Caco-2 (cell line): ENCODE measurements at regions of chr20 and their contacts with region 1.

Region 1: DNA sequence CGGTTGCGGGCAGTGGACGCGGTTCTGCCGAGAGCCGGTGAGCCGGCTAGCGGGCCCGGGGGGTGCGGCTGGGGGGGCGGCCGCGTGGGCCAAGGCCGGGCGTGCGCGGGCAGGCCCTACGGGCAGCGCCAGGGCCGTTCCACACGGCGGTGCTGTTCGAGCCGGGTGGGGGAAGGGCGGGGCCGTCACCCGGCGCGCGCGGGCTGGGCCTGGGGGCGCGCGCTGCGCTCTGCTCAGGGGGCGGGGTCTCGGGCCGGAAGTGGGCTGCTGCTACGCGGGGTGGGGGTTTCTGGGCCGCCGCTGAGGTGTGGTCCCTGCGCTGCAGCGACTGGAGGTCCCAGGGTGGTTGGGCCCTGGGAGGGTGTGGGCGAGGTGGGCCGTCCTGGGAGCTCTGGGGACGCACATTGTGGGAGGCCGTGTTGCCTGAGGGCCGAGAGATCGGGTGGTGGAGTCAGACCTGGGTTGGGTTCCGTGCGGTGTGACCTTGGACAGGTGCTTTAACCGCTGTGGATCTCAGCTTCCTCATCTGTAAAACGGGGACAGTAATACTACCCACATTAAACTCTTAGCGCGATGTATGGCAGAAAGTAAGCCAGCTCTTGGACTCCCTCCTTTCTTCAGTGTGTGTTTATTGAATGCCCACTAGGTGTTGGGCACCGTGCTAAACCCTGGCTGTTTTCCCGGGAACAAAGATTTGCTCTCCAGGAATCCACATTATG is 397 bp downstream of the MAPRE1 start:
- DNase-seq: peak; percentile 86 to 94
- H3K4me3 ChIP-seq: peak overlapping the region; percentile 65
- H3K4me3 Mint-ChIP-seq: peak overlapping the region; percentile 92
- H3K27ac Mint-ChIP-seq: peak overlapping the region; percentile 93
- H3K4me1 ChIP-seq: peaks cover 33% of the 10 kb centered on the region
- H3K4me1 Mint-ChIP-seq: peaks cover 34% of the 10 kb centered on the region
- H3K27me3 ChIP-seq: no peaks in the 10 kb centered on the region
- H3K27me3 Mint-ChIP-seq: no peaks in the 10 kb centered on the region
- CTCF ChIP-seq: peak in 1 of 2 experiments; percentile 8

Region 2: DNA sequence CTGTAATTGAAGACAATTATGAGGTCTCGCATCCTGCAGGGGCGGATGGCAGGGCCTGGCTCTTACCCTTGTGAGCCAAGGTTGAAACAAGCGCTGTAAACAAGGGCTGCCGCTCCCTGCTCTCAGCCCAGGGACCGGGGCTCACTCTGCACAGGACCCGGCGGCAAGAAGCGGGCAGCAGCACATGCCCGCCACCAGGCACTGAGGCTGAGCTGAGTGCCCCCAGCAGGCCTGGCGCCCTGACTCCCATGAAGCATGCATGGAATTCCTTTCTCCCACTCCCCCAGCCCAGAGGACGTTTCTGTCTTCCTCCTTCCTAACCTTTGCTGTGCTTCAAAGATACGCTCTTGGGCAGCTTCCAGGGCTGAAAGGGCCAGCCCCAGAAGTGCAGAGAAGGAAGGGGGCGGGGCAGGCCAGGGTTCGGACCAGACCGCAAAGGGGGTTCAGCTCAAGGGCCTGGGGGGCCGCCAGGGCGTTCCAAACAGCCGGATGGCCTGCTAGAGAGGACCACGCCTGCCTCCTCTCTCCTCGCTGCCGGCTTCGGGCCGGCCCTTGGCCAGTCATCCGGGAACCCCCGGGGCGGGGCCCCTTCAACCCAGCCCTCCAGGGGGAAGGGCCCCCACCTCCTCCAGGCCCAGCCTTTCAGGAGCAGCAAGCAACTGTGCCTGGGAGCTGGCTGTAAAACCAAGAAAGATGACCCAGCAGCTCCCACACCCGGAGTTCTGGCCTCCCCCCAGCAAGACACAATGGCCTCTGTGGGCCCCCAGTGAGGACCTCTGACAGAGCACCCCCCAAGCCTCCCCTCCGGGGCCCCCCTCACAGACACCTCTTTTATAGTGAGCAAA is 345.0 kb before region 1 on chr20:
- CTCF ChIA-PET with region 1: no interaction called
- POLR2A ChIA-PET with region 1: interaction called, 14 read pairs
- intact Hi-C with region 1: no loop called
- DNase-seq: peak; percentile 99 to 100
- H3K4me3 ChIP-seq: peak overlapping the region; percentile 42
- H3K4me3 Mint-ChIP-seq: peak overlapping the region; percentile 93
- H3K27ac Mint-ChIP-seq: peak overlapping the region; percentile 93
- H3K4me1 ChIP-seq: peaks cover 79% of the 10 kb centered on the region
- H3K4me1 Mint-ChIP-seq: peaks cover 69% of the 10 kb centered on the region
- H3K27me3 ChIP-seq: no peaks in the 10 kb centered on the region
- H3K27me3 Mint-ChIP-seq: no peaks in the 10 kb centered on the region
- CTCF ChIP-seq: peak in 1 of 2 experiments; percentile 18

Region 3: GRCh38 chr20:32707691-32708581 is 112.2 kb before region 1 on chr20:
- CTCF ChIA-PET with region 1: interaction called, 4 read pairs
- POLR2A ChIA-PET with region 1: interaction called, 24 read pairs
- intact Hi-C with region 1: no loop called
- DNase-seq: no peak
- H3K4me3 ChIP-seq: no peak overlapping the region
- H3K4me3 Mint-ChIP-seq: no peak overlapping the region
- H3K27ac Mint-ChIP-seq: no peak overlapping the region
- H3K4me1 ChIP-seq: peaks cover 17% of the 10 kb centered on the region
- H3K4me1 Mint-ChIP-seq: peaks cover 19% of the 10 kb centered on the region
- H3K27me3 ChIP-seq: no peaks in the 10 kb centered on the region
- H3K27me3 Mint-ChIP-seq: no peaks in the 10 kb centered on the region
- CTCF ChIP-seq: no peak

Region 4: DNA sequence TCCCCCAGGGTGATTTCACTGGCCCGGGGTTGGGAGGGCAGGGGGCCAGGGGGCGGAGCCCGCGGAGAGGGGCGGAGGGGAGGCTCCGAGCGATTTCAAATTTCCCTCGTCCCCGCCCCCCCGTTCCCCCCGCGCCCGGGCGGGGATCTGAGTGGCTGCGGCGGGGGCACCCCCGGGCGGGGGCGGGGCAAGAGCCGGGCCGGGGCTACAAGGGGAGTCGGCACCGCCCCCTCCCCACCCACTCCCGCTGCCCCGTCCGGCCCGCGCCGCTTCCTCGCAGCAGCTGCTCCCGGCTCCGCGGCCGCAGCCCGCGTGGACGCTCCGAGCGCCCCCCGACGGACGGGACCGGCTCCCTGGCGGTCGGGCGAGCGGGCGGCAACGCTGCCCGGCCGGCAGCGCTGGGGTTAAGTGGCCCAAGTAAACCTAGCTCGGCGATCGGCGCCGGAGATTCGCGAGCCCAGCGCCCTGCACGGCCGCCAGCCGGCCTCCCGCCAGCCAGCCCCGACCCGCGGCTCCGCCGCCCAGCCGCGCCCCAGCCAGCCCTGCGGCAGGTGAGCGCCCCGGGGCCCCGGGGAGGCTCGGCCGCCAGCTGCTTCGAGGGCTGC is 57.9 kb before region 1 on chr20 and contains the start of gene DNMT3B:
- CTCF ChIA-PET with region 1: no interaction called
- POLR2A ChIA-PET with region 1: interaction called, 12 read pairs
- intact Hi-C with region 1: no loop called
- DNase-seq: peak; percentile 97 to 99
- H3K4me3 ChIP-seq: peak within 1 kb of the TSS; percentile 87
- H3K4me3 Mint-ChIP-seq: peak within 1 kb of the TSS; percentile 100
- H3K27ac Mint-ChIP-seq: peak within 1 kb of the TSS; percentile 93
- H3K4me1 ChIP-seq: peaks cover 25% of the 10 kb centered on the region
- H3K4me1 Mint-ChIP-seq: peaks cover 33% of the 10 kb centered on the region
- H3K27me3 ChIP-seq: no peaks in the 10 kb centered on the region
- H3K27me3 Mint-ChIP-seq: no peaks in the 10 kb centered on the region
- CTCF ChIP-seq: peak in 1 of 2 experiments; percentile 31
- total RNA-seq, gene DNMT3B: 95.5 and 105 TPM in 2 replicates

Region 5: GRCh38 chr20:32830437-32830836 is 10.3 kb after region 1 on chr20:
- CTCF ChIA-PET with region 1: interaction called, 6 read pairs
- POLR2A ChIA-PET with region 1: interaction called, 10 read pairs
- intact Hi-C with region 1: no loop called
- DNase-seq: peak in 1 of 2 experiments; percentile 14
- H3K4me3 ChIP-seq: no peak overlapping the region
- H3K4me3 Mint-ChIP-seq: no peak overlapping the region
- H3K27ac Mint-ChIP-seq: peak overlapping the region; percentile 12
- H3K4me1 ChIP-seq: peaks cover 4% of the 10 kb centered on the region
- H3K4me1 Mint-ChIP-seq: peaks cover 7% of the 10 kb centered on the region
- H3K27me3 ChIP-seq: no peaks in the 10 kb centered on the region
- H3K27me3 Mint-ChIP-seq: no peaks in the 10 kb centered on the region
- CTCF ChIP-seq: no peak

Region 6: DNA sequence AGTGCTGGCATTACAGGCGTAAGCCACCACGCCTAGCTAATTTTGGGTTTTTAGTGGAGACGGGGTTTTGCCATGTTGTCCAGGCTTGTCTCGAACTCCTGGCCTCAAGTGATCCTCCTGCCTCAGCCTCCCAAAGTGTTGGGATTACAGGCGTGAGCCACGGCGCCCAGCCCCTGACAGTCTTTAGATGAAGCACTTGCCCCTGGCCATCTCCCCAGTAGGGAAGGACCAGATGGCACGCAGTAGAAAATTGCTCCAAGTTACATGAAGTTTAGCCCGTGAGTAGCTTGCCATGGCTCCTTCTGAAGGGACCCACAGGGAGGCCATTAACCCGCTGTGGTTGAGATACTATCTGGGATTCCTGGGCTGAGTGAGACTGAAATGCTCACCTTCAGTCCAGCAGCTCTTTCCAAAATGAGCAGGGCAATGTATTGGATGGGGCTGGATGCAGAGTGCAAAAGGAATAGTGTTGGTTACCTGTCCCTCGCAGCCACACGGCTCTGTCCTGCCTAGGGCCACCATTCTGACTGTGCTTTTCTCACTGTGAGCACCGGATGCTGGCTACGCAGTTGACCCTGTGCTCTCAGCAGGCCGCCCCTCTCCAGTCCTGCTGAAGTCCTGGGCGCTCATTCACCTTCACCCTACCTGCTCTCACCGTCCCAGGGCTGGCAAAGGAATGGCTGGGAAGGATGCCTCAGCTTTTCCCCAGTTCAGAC is 105.5 kb after region 1 on chr20:
- CTCF ChIA-PET with region 1: no interaction called
- POLR2A ChIA-PET with region 1: no interaction called
- intact Hi-C with region 1: no loop called
- DNase-seq: no peak
- H3K4me3 ChIP-seq: no peak overlapping the region
- H3K4me3 Mint-ChIP-seq: no peak overlapping the region
- H3K27ac Mint-ChIP-seq: no peak overlapping the region
- H3K4me1 ChIP-seq: no peaks in the 10 kb centered on the region
- H3K4me1 Mint-ChIP-seq: no peaks in the 10 kb centered on the region
- H3K27me3 ChIP-seq: no peaks in the 10 kb centered on the region
- H3K27me3 Mint-ChIP-seq: peaks cover 9% of the 10 kb centered on the region
- CTCF ChIP-seq: no peak